Activated T-helper 1 cell treated with anti-CD3 and anti-CD28 coated beads, Interleukin-12 subunit alpha, Interleukin-12 subunit beta, Interleukin-2, Interleukin-4 antibody, amounts not matched to agents 30 ng/mL and 10 ng/mL and 1 ng/mL, durations not matched to agents 14 hours and 24 hours and 36 hours (primary cell): ENCODE measurements at regions of chr15 and their contacts with region 1.

Region 1: GRCh38 chr15:92954578-92954977 is 54.5 kb downstream of the CHD2 start:
- DNase-seq: no peak
- H3K4me3 Mint-ChIP-seq: no peak overlapping the region
- H3K27ac Mint-ChIP-seq: no peak overlapping the region
- H3K4me1 Mint-ChIP-seq: peaks cover 43% of the 10 kb centered on the region
- H3K27me3 Mint-ChIP-seq: no peaks in the 10 kb centered on the region

Region 2: DNA sequence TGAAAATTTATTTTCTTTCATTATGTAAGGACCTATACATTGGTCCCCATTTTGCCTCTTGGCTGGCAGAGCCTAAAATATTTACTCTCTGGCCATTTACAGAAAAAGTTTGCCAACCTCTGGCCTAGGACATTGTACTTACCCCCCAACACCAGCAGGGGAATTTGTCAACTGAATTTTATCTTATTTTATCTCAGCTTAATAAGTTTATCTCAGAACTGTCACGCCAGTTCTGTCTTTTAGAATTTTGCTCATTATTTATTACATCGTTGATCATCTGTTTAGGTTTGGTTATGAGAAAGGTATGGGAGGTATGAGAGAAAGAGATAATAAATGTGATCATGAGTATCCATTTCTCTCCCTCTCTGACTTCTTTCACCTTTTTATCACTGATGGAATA is 16.2 kb before region 1 on chr15:
- intact Hi-C with region 1: loop called (anchors 2 kb)
- DNase-seq: no peak
- H3K4me3 Mint-ChIP-seq: no peak overlapping the region
- H3K27ac Mint-ChIP-seq: no peak overlapping the region
- H3K4me1 Mint-ChIP-seq: peaks cover 55% of the 10 kb centered on the region
- H3K27me3 Mint-ChIP-seq: no peaks in the 10 kb centered on the region

Region 3: DNA sequence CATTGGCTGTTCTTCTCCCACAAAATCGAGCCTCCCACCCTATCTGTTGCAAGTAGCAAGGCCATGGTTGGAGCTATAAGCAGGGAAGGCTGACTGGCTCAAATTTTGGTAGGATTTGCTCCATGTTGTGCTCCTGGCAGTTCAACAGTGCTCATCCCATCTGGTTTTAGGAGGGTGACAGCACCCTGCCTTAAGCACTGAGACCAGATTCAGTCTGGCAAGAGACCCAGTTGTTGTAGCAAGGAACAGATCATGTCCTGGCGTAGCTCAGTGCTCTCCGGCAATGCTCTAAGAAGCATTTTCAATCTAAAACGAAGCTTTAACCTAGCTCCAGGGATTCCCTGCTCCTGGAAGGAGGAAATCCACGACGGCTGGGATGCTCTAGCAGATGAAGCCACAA is 43.2 kb after region 1 on chr15:
- intact Hi-C with region 1: loop called (anchors 5 kb)
- DNase-seq: no peak
- H3K4me3 Mint-ChIP-seq: no peak overlapping the region
- H3K27ac Mint-ChIP-seq: peak overlapping the region; percentile 35
- H3K4me1 Mint-ChIP-seq: peaks cover 24% of the 10 kb centered on the region
- H3K27me3 Mint-ChIP-seq: no peaks in the 10 kb centered on the region